ENCODE measurements at regions of chr20 and their contacts with region 1.

Region 1: GRCh38 chr20:13510837-13511488 is 127.8 kb downstream of the TASP1 start:
- DNase-seq: no peak
- ATAC-seq: no peak
- H3K4me3 ChIP-seq: no peak overlapping the region
- H3K27ac ChIP-seq: no peak overlapping the region
- H3K4me1 ChIP-seq: no peaks in the 10 kb centered on the region
- H3K27me3 ChIP-seq: no peaks in the 10 kb centered on the region
- CTCF ChIP-seq: no peak

Region 2: GRCh38 chr20:13486694-13487093 is 24.3 kb before region 1 on chr20:
- CTCF ChIA-PET with region 1: no interaction called
- POLR2A ChIA-PET with region 1: interaction called, 25 read pairs
- intact Hi-C with region 1: no loop called
- DNase-seq: no peak
- ATAC-seq: no peak
- H3K4me3 ChIP-seq: no peak overlapping the region
- H3K27ac ChIP-seq: no peak overlapping the region
- H3K4me1 ChIP-seq: no peaks in the 10 kb centered on the region
- H3K27me3 ChIP-seq: no peaks in the 10 kb centered on the region
- CTCF ChIP-seq: no peak

Region 3: DNA sequence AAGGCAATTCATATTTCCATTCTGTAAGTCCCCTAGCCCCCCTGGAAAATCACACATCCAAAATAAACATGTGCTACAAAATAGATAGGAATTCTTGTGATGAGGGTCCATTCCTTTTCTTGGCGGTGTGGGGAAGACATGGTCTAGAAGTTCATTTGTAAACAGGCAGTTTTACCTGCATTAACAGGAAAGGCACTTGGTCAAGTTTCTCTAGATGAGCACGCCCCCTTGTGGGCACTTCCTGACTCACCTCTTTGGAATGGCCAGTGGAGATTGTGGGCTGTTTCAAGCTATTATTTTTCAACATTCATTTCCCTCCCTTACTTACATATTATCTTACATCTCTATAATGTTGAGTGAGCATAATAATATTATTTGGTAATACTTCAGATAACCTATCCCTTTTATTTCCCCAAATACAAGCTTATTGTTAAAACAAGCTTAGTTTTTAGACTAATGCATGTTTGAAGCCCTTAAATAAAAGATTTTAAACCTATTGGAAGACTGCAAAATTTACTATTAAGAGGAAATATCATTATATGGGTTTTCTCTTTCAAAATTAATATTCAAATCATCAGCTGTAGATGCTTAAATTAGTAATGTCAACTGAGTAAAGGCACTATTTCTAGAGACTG is 35.7 kb after region 1 on chr20:
- CTCF ChIA-PET with region 1: no interaction called
- POLR2A ChIA-PET with region 1: no interaction called
- intact Hi-C with region 1: no loop called
- DNase-seq: peak; percentile 93
- ATAC-seq: peak; percentile 88
- H3K4me3 ChIP-seq: no peak overlapping the region
- H3K27ac ChIP-seq: no peak overlapping the region
- H3K4me1 ChIP-seq: peaks cover 7% of the 10 kb centered on the region
- H3K27me3 ChIP-seq: no peaks in the 10 kb centered on the region
- CTCF ChIP-seq: peak; percentile 92

Region 4: GRCh38 chr20:13638496-13639222 is 127.7 kb after region 1 on chr20 and contains the start of gene TASP1:
- CTCF ChIA-PET with region 1: no interaction called
- POLR2A ChIA-PET with region 1: no interaction called
- intact Hi-C with region 1: no loop called
- DNase-seq: peak; percentile 99
- ATAC-seq: peak; percentile 98
- H3K4me3 ChIP-seq: peak within 1 kb of the TSS; percentile 86
- H3K27ac ChIP-seq: peak within 1 kb of the TSS; percentile 66
- H3K4me1 ChIP-seq: peaks cover 7% of the 10 kb centered on the region
- H3K27me3 ChIP-seq: no peaks in the 10 kb centered on the region
- CTCF ChIP-seq: no peak
- total RNA-seq, gene TASP1: 10.7 and 13.9 TPM in 2 replicates